ENCODE measurements at regions of chr6 and their contacts with region 1.

Region 1: DNA sequence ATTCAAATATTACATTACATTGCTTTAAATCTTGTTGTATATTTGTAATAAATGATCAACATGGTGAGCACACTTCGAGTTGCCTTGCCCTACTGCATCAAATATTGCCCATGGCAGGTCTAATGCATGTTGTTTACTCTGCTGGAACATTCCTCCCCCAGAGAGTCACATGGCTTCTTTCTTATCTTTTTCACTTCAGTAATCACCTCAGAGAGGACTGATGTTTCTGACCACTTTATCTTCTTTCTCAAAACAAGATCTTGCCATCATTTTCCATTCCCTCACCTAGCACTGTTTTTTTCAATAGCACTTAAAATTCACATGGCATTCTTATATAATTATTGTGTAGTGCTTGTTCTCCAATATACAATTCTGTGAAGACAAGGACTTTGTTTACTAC is 243.5 kb upstream of the THEMIS start:
- DNase-seq: no peak
- ATAC-seq: no peak
- H3K4me3 ChIP-seq: no peak overlapping the region
- H3K4me3 Mint-ChIP-seq: no peak overlapping the region
- H3K27ac ChIP-seq: no peak overlapping the region
- H3K27ac Mint-ChIP-seq: no peak overlapping the region
- H3K4me1 ChIP-seq: no peaks in the 10 kb centered on the region
- H3K4me1 Mint-ChIP-seq: peaks cover 18% of the 10 kb centered on the region
- H3K27me3 ChIP-seq: no peaks in the 10 kb centered on the region
- H3K27me3 Mint-ChIP-seq: no peaks in the 10 kb centered on the region
- CTCF ChIP-seq: no peak

Region 2: GRCh38 chr6:128112494-128112893 is 31.8 kb before region 1 on chr6:
- CTCF ChIA-PET with region 1: no interaction called
- POLR2A ChIA-PET with region 1: no interaction called
- intact Hi-C with region 1: loop called in 1 of 2 experiments (anchors 5 kb)
- DNase-seq: peak in 1 of 9 experiments; percentile 24
- ATAC-seq: peak; percentile 44
- H3K4me3 ChIP-seq: peak overlapping the region; percentile 32 to 44
- H3K4me3 Mint-ChIP-seq: peak overlapping the region; percentile 76
- H3K27ac ChIP-seq: peak overlapping the region in 1 of 2 experiments; percentile 11
- H3K27ac Mint-ChIP-seq: peak overlapping the region; percentile 80
- H3K4me1 ChIP-seq: no peaks in the 10 kb centered on the region
- H3K4me1 Mint-ChIP-seq: peaks cover 20% of the 10 kb centered on the region
- H3K27me3 ChIP-seq: no peaks in the 10 kb centered on the region
- H3K27me3 Mint-ChIP-seq: no peaks in the 10 kb centered on the region
- CTCF ChIP-seq: no peak

Region 3: DNA sequence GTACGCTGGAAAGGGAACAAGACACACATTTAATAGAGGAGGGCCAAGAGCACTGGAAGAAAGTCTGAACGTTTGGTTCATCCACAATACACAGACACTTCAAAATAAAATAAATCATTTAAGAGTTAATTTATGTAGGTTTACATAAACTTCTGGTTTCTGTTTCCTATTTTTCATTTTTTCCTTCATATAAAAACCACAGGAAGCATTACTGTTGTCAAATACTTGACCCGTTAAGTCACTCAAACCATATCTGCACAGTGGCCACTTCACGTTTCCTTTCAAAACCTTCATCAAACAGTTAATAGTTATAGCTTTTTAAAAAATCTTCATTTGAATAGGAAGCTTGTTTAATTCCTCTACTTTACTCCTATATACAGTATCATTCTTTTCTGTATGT is 14.2 kb after region 1 on chr6:
- CTCF ChIA-PET with region 1: no interaction called
- POLR2A ChIA-PET with region 1: no interaction called
- intact Hi-C with region 1: no loop called
- DNase-seq: no peak
- ATAC-seq: no peak
- H3K4me3 ChIP-seq: no peak overlapping the region
- H3K4me3 Mint-ChIP-seq: no peak overlapping the region
- H3K27ac ChIP-seq: no peak overlapping the region
- H3K27ac Mint-ChIP-seq: no peak overlapping the region
- H3K4me1 ChIP-seq: no peaks in the 10 kb centered on the region
- H3K4me1 Mint-ChIP-seq: peaks cover 2% of the 10 kb centered on the region
- H3K27me3 ChIP-seq: no peaks in the 10 kb centered on the region
- H3K27me3 Mint-ChIP-seq: no peaks in the 10 kb centered on the region
- CTCF ChIP-seq: no peak

Region 4: GRCh38 chr6:128235556-128235955 is 91.2 kb after region 1 on chr6:
- CTCF ChIA-PET with region 1: no interaction called
- POLR2A ChIA-PET with region 1: no interaction called
- intact Hi-C with region 1: no loop called
- DNase-seq: no peak
- ATAC-seq: no peak
- H3K4me3 ChIP-seq: no peak overlapping the region
- H3K4me3 Mint-ChIP-seq: no peak overlapping the region
- H3K27ac ChIP-seq: no peak overlapping the region
- H3K27ac Mint-ChIP-seq: no peak overlapping the region
- H3K4me1 ChIP-seq: peaks cover 14% of the 10 kb centered on the region
- H3K4me1 Mint-ChIP-seq: peaks cover 12% of the 10 kb centered on the region
- H3K27me3 ChIP-seq: no peaks in the 10 kb centered on the region
- H3K27me3 Mint-ChIP-seq: no peaks in the 10 kb centered on the region
- CTCF ChIP-seq: no peak